ENCODE measurements at regions of chr2 and their contacts with region 1.

Region 1: GRCh38 chr2:98473995-98474780 is 29.5 kb downstream of the INPP4A start:
- DNase-seq: no peak
- H3K4me3 ChIP-seq: no peak overlapping the region
- H3K4me3 Mint-ChIP-seq: peak overlapping the region; percentile 44 to 59
- H3K27ac ChIP-seq: peak overlapping the region in 1 of 2 donors; percentile 56
- H3K27ac Mint-ChIP-seq: peak overlapping the region in 6 of 7 donors; percentile 46 to 88 (median 64)
- H3K4me1 ChIP-seq: peaks cover 60 to 75% of the 10 kb centered on the region in 2 donors
- H3K4me1 Mint-ChIP-seq: peaks cover 89% of the 10 kb centered on the region
- H3K27me3 ChIP-seq: no peaks in the 10 kb centered on the region
- H3K27me3 Mint-ChIP-seq: no peaks in the 10 kb centered on the region
- CTCF ChIP-seq: no peak

Region 2: DNA sequence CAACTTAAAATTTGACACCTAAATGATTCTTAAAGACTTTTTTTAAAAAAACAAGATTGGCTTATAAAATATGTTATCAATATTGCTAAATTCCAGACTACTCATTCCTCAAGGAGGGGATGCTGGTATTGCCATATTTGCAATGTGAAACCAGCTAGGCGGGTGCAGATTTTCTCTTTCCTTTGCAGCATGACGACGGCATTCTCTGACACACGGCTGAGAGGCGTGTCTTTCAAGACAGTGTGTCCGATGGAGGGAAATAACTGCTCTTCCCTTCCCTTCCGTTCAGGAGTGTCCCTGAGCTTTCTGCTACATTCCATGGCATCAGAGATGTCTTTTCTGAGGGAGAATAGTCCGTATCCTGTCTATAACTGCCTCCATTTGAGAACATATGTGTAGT is 166.1 kb before region 1 on chr2:
- intact Hi-C with region 1: no loop called
- DNase-seq: no peak
- H3K4me3 ChIP-seq: no peak overlapping the region
- H3K4me3 Mint-ChIP-seq: no peak overlapping the region
- H3K27ac ChIP-seq: no peak overlapping the region
- H3K27ac Mint-ChIP-seq: peak overlapping the region in 1 of 7 donors; percentile 38
- H3K4me1 ChIP-seq: no peaks in the 10 kb centered on the region
- H3K4me1 Mint-ChIP-seq: no peaks in the 10 kb centered on the region
- H3K27me3 ChIP-seq: peaks cover 0 to 8% of the 10 kb centered on the region in 2 donors
- H3K27me3 Mint-ChIP-seq: peaks cover 14 to 30% (median 23%) of the 10 kb centered on the region in 3 donors
- CTCF ChIP-seq: no peak

Region 3: DNA sequence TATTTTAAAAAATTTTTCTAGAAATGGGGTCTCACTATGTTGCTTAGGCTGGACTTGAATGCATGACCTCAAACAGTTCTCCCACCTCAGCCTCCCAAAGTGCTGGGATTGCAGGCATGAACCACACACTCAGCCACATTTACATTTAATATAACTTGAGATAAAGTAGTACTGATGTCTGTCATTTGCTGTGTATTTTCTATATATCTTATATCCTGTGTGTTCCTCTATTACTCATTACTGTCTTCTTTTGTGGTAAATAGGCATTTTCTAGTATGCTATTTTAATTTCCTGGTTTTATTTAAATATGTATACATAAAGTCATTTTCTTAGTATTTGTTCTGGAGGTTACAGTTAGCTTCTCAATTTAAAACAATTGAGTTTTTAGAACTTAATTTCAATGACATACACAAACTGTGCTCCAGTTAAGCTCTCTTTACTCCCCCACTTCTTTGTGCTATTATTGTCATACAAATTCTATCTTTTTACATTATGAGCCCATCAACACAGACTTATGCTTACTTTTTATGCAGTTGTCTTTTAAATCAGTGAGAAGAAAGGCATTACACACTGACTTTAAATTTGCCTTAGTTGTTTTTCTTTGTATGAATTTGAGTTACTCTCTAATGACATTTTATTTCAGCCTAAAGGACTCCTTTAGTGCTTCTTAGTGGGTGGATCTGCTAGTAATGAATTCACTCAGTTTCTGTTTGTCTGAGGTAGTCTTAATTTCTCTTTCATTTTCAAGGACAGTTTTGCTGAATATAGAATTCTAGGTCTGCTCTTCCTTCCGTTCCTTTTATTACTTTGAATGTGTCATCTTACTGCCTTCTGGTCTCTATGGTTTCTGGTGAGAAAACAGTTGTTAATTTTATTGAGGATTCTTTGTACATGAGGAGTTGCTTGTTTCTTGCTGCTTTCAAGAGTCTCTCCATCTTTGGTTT is 35.7 kb before region 1 on chr2:
- intact Hi-C with region 1: loop called in 1 of 2 experiments (anchors 5 kb)
- DNase-seq: no peak
- H3K4me3 ChIP-seq: no peak overlapping the region
- H3K4me3 Mint-ChIP-seq: no peak overlapping the region
- H3K27ac ChIP-seq: no peak overlapping the region
- H3K27ac Mint-ChIP-seq: no peak overlapping the region
- H3K4me1 ChIP-seq: peaks cover 6 to 8% of the 10 kb centered on the region in 2 donors
- H3K4me1 Mint-ChIP-seq: peaks cover 9% of the 10 kb centered on the region
- H3K27me3 ChIP-seq: no peaks in the 10 kb centered on the region
- H3K27me3 Mint-ChIP-seq: peaks cover 0 to 2% (median 0%) of the 10 kb centered on the region in 3 donors
- CTCF ChIP-seq: no peak